PC-3 (cell line): ENCODE measurements at regions of chr1 and their contacts with region 1.

Region 1: DNA sequence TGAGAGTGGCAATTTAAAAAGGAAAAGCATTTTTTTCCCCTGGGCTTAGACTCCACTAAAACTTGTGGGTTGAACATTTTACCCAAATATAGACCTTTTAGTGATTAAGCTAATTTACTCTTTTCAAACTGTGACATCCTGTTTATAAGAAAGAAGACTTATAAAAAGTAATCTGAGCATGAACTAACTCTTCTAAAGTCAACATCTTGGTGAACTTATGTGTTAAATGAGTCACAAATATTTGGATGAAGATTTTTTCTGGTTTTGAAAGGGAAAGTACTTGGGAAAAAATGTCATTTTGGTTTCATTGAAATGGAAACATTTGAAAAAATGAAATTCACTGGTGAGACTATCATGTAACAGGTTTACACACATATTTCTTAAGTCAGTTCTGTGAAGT is 109.8 kb downstream of the KCNK2 start:
- DNase-seq: peak; percentile 85
- ATAC-seq: peak; percentile 60
- H3K4me3 ChIP-seq: no peak overlapping the region
- H3K27ac ChIP-seq: peak overlapping the region; percentile 16
- H3K4me1 ChIP-seq: peaks cover 38% of the 10 kb centered on the region
- H3K27me3 ChIP-seq: no peaks in the 10 kb centered on the region
- CTCF ChIP-seq: no peak

Region 2: GRCh38 chr1:215210167-215210566 is 17.9 kb after region 1 on chr1:
- CTCF ChIA-PET with region 1: no interaction called
- POLR2A ChIA-PET with region 1: no interaction called
- intact Hi-C with region 1: no loop called
- DNase-seq: no peak
- ATAC-seq: no peak
- H3K4me3 ChIP-seq: no peak overlapping the region
- H3K27ac ChIP-seq: no peak overlapping the region
- H3K4me1 ChIP-seq: no peaks in the 10 kb centered on the region
- H3K27me3 ChIP-seq: no peaks in the 10 kb centered on the region
- CTCF ChIP-seq: no peak

Region 3: GRCh38 chr1:215330426-215330825 is 138.1 kb after region 1 on chr1:
- CTCF ChIA-PET with region 1: no interaction called
- POLR2A ChIA-PET with region 1: no interaction called
- intact Hi-C with region 1: loop called (anchors 5 kb)
- DNase-seq: no peak
- ATAC-seq: no peak
- H3K4me3 ChIP-seq: no peak overlapping the region
- H3K27ac ChIP-seq: no peak overlapping the region
- H3K4me1 ChIP-seq: no peaks in the 10 kb centered on the region
- H3K27me3 ChIP-seq: no peaks in the 10 kb centered on the region
- CTCF ChIP-seq: no peak